Activated CD8-positive, alpha-beta T cell treated with anti-CD3 and anti-CD28 coated beads for 36 hours (primary cell): ENCODE measurements at regions of chr3 and their contacts with region 1.

Region 1: DNA sequence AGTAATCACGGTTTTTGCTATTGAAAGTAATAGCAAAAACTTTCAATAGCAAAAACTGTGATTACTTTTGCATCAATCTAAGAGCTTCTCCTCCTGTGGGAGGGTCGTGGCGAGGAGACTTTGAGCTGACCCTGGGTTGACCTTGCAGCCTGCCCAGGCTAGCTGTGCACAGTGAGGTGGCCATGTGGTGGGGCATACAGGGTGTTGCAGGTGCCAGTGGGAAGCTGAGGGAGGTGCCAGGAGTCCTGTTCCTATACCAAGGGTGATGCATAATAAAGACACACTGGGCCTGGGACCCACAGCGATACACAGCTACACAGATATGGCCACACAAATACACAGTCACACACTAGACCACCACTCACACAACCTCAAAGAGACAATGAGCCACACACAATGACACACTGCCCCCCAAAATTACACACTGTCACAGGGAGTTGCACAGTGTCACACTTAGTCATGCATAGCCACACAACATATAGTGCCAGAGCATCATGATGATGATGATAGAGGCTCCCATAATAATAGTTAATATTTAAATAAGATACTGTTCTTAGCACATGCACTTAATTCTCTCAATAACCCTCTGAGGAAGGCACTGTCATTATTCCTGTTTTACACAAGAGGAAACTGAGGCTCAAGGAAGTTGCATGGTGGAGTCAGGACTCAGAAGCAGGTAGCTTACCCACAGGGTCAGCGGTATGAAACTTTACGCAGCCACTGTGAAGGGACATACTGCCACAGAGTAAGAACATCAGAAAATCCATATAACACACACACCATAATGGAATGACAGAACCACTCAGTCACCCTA is 6.3 kb downstream of the PLCD1 start:
- DNase-seq: peak; percentile 21
- ATAC-seq: no peak
- H3K4me3 Mint-ChIP-seq: peak overlapping the region; percentile 81
- H3K27ac Mint-ChIP-seq: peak overlapping the region; percentile 93
- H3K4me1 Mint-ChIP-seq: peaks cover 23% of the 10 kb centered on the region
- H3K27me3 Mint-ChIP-seq: peaks cover 3% of the 10 kb centered on the region
- CTCF ChIP-seq: no peak

Region 2: DNA sequence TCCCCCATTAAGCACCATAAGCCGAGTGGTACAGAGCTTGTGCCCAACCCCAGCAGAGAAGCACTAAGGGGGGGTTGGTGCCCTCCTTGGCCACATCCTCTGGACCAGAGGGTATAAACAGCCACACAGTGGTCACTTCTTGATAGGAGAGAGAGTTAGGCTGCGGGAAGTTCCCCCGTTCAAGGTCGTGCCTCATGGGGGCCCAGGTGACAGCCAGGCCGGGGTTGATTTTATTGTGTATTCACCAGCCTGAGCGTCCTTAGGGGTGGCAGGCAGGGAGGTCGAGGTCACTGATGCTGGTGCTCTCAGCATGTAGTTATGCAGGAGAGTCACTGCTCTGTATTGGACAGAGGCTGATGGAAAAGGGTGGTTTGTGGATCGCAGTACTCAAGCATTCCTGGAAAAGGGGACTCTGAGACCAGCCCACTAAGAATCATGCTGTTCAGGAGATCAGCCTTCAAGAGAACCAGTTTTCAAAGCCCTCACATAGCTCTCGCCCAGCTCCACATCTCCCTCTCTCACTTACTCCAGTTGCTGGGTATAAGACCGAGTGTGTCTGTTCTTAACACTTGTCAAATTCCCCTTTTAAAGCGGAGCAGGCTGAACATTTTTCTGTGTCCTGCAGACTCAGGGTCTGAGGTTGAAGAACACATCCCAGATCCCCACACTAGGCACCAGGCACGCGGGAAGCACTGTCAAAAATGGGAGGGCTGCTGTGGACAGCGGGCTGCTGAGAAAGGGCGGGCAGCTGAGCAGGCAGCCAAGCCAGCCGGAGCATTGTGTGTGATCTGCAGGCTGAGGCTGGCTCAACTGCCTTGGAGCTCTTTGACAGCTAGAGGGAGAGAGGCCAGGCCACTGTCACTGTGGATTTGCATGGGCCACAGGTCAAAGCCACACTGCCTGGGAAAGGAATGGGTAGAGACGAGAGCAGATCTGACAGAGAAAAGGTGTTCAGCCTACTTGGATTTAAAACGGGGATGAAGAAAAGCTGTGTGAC is 569.4 kb before region 1 on chr3:
- CTCF ChIA-PET with region 1: no interaction called
- POLR2A ChIA-PET with region 1: no interaction called
- intact Hi-C with region 1: no loop called
- DNase-seq: no peak
- ATAC-seq: no peak
- H3K4me3 Mint-ChIP-seq: no peak overlapping the region
- H3K27ac Mint-ChIP-seq: no peak overlapping the region
- H3K4me1 Mint-ChIP-seq: peaks cover 6% of the 10 kb centered on the region
- H3K27me3 Mint-ChIP-seq: peaks cover 57% of the 10 kb centered on the region
- CTCF ChIP-seq: no peak

Region 3: GRCh38 chr3:37819591-37819990 is 203.5 kb before region 1 on chr3:
- CTCF ChIA-PET with region 1: no interaction called
- POLR2A ChIA-PET with region 1: no interaction called
- intact Hi-C with region 1: no loop called
- DNase-seq: no peak
- ATAC-seq: no peak
- H3K4me3 Mint-ChIP-seq: no peak overlapping the region
- H3K27ac Mint-ChIP-seq: no peak overlapping the region
- H3K4me1 Mint-ChIP-seq: no peaks in the 10 kb centered on the region
- H3K27me3 Mint-ChIP-seq: no peaks in the 10 kb centered on the region
- CTCF ChIP-seq: no peak

Region 4: GRCh38 chr3:37996785-37997301 is 26.3 kb before region 1 on chr3:
- CTCF ChIA-PET with region 1: interaction called, 21 read pairs
- POLR2A ChIA-PET with region 1: interaction called, 5 read pairs
- intact Hi-C with region 1: no loop called
- DNase-seq: peak; percentile 93
- ATAC-seq: peak; percentile 71
- H3K4me3 Mint-ChIP-seq: no peak overlapping the region
- H3K27ac Mint-ChIP-seq: peak overlapping the region; percentile 95
- H3K4me1 Mint-ChIP-seq: peaks cover 51% of the 10 kb centered on the region
- H3K27me3 Mint-ChIP-seq: no peaks in the 10 kb centered on the region
- CTCF ChIP-seq: peak; percentile 96

Region 5: DNA sequence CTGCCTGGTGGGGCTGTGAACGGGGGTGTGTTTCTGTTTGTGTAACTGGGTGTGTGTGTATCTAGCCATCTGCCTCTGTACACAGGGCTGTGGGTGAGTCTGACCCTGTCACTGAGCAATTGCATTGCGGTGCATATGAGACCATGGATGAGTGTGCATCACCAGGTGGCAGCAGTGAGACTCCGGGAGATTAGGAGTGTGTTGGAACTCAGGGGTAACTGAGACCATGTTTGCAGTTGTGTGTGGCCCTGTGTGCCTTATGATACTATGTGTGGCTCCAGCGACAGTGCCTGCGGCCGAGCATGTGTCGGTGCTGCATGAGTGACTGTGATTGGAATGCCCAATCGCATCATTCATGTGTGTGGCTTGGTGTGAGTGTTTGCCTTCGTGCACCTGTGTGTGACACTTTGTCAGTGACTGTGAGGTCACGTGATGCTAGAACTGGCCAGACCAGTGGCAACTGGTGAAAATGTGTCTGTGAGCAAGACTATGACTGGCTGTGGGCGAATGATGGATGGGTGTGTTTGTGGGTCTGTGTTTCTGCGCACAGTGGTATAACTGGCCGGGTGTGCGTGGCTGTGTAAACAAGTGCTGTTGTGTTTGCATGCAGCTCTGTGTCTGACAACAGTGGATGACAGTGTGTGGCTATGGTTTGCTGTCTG is 18.6 kb before region 1 on chr3:
- CTCF ChIA-PET with region 1: interaction called, 21 read pairs
- POLR2A ChIA-PET with region 1: interaction called, 4 read pairs
- intact Hi-C with region 1: no loop called
- DNase-seq: peak; percentile 78
- ATAC-seq: peak; percentile 54
- H3K4me3 Mint-ChIP-seq: no peak overlapping the region
- H3K27ac Mint-ChIP-seq: peak overlapping the region; percentile 46
- H3K4me1 Mint-ChIP-seq: peaks cover 17% of the 10 kb centered on the region
- H3K27me3 Mint-ChIP-seq: no peaks in the 10 kb centered on the region
- CTCF ChIP-seq: peak; percentile 49